Naive thymus-derived CD4-positive, alpha-beta T cell (primary cell): ENCODE measurements at regions of chr10 and their contacts with region 1.

Region 1: DNA sequence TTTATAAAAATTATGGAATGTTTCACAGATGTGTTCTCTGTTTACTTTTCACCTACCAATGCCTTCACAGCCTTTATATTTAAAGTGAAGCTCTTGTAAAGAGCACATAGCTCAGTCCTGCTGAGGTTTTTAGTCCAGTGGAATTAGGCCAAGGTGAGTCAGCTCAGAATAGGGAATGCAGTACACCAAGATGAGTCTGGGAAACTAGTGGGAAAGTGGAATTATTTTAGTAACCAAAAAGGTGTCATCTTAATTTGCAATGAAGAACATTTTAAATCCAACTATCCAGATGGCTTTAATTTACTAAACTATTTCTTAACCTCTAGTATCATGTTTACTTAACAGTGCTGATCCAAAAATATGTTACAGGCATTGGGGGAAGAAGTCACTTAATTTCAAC is 236.3 kb upstream of the CTBP2 start:
- DNase-seq: no peak
- ATAC-seq: no peak
- H3K4me3 ChIP-seq: no peak overlapping the region
- H3K4me3 Mint-ChIP-seq: no peak overlapping the region
- H3K27ac ChIP-seq: no peak overlapping the region
- H3K27ac Mint-ChIP-seq: no peak overlapping the region
- H3K4me1 ChIP-seq: no peaks in the 10 kb centered on the region
- H3K4me1 Mint-ChIP-seq: no peaks in the 10 kb centered on the region
- H3K27me3 ChIP-seq: no peaks in the 10 kb centered on the region
- H3K27me3 Mint-ChIP-seq: peaks cover 0 to 10% (median 5%) of the 10 kb centered on the region in 5 donors

Region 2: DNA sequence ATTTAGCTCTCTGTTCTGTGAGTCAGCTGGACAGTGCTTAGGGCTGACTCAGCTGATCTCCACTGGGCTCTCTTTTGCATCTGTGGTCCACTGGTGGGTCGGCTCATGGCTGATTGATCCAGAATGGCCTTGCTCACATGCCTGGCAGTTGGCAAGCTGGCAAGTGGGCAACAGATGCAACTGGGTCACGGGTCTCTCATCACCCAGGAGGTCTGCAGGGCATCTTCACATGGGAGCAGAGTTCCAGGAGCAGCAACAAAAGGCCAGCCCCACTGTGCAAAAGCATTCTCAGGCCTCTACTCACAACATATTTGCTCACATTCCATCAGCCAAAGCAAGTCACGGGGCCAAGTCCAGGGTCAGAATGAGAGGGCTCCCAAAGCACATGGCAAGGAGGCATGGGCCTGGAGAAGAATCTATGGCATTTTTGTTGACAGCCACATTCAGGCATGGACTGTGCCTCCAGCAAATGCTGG is 1076.7 kb before region 1 on chr10:
- CTCF ChIA-PET with region 1: no interaction called
- POLR2A ChIA-PET with region 1: no interaction called
- intact Hi-C with region 1: loop called in 1 of 2 experiments (anchors 10 kb)
- DNase-seq: no peak
- ATAC-seq: no peak
- H3K4me3 ChIP-seq: no peak overlapping the region
- H3K4me3 Mint-ChIP-seq: no peak overlapping the region
- H3K27ac ChIP-seq: no peak overlapping the region
- H3K27ac Mint-ChIP-seq: no peak overlapping the region
- H3K4me1 ChIP-seq: no peaks in the 10 kb centered on the region
- H3K4me1 Mint-ChIP-seq: peaks cover 0 to 3% (median 0%) of the 10 kb centered on the region in 7 donors
- H3K27me3 ChIP-seq: no peaks in the 10 kb centered on the region
- H3K27me3 Mint-ChIP-seq: peaks cover 0 to 4% (median 0%) of the 10 kb centered on the region in 5 donors